ENCODE measurements at regions of chr5 and their contacts with region 1.

Region 1: DNA sequence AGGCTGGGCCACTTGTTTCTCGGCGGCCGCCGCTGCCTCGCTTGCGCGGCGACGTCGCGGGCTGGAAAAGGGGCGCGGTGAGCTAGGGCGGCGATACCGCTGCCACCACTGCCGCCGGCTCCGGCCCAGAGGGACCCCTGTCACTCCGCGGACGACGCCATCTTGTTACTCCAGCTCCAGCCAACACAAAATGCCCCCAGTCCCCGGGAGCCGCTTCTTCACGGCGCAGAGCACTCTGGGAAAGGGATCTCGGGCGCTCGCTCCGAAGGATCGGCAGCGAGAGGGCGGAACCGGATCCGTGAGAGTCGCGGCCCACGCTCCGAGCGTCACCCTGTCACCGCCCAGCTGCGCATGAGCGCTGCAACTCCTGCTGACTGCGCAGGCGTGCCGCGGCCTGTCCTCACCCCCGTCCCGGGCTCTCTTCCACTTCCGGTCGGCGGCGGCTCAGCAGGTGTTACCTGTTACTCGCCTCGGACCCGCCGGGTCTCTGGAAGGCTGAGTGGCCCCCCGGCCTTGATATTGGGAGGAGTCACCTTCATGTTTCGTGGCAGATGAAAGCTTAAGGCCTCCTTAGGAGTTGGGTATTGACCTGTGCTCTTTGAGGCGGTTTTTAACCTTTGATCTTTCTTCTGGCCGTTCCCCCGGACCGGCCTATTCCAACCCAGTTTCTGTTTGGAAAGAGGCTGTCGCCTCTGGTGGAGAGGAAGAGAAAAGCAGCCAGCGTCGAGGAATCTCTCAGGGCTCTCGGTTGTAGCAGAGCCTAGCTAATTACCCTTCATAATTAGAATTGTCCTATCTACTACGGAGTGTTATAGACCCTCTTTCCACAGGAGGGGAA is at the start of gene CSNK1A1:
- DNase-seq: peak; percentile 99
- H3K4me3 Mint-ChIP-seq: peak within 1 kb of the TSS; percentile 93
- H3K27ac Mint-ChIP-seq: peak within 1 kb of the TSS; percentile 95
- H3K4me1 Mint-ChIP-seq: peaks cover 37% of the 10 kb centered on the region
- H3K27me3 Mint-ChIP-seq: no peaks in the 10 kb centered on the region
- total RNA-seq, gene CSNK1A1: 194 to 203 TPM

Region 2: GRCh38 chr5:149345147-149345875 is 206.1 kb before region 1 on chr5 and contains the start of gene GRPEL2:
- CTCF ChIA-PET with region 1: interaction called, 7 read pairs
- POLR2A ChIA-PET with region 1: interaction called, 71 read pairs
- DNase-seq: peak; percentile 94
- H3K4me3 Mint-ChIP-seq: peak within 1 kb of the TSS; percentile 81
- H3K27ac Mint-ChIP-seq: peak within 1 kb of the TSS; percentile 87
- H3K4me1 Mint-ChIP-seq: peaks cover 47% of the 10 kb centered on the region
- H3K27me3 Mint-ChIP-seq: no peaks in the 10 kb centered on the region
- total RNA-seq, gene GRPEL2: 43.8 to 49.4 TPM

Region 3: GRCh38 chr5:149367249-149367971 is 184.0 kb before region 1 on chr5:
- CTCF ChIA-PET with region 1: interaction called, 10 read pairs
- POLR2A ChIA-PET with region 1: interaction called, 5 read pairs
- DNase-seq: peak; percentile 63
- H3K4me3 Mint-ChIP-seq: no peak overlapping the region
- H3K27ac Mint-ChIP-seq: no peak overlapping the region
- H3K4me1 Mint-ChIP-seq: peaks cover 6% of the 10 kb centered on the region
- H3K27me3 Mint-ChIP-seq: no peaks in the 10 kb centered on the region

Region 4: DNA sequence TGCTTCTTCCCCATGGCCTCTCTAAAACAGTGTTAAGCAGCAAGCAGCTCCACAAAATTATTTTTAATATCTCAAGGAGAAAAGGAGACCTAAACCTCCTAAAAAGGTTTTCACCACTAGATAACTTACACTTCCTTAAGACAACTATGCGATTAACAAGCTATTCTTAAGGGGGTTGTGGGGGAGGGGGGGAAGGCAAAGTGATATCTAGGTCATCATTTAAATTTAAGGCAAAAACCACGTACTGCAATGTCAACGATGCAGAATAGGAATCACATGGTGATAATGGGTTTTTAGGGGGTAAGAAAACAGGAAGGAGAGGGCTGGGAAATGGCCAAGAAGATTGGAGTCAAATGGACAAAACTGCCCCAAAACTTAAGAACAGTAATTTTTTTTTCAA is 32.8 kb before region 1 on chr5:
- CTCF ChIA-PET with region 1: interaction called, 4 read pairs
- POLR2A ChIA-PET with region 1: interaction called, 13 read pairs
- DNase-seq: no peak
- H3K4me3 Mint-ChIP-seq: no peak overlapping the region
- H3K27ac Mint-ChIP-seq: no peak overlapping the region
- H3K4me1 Mint-ChIP-seq: peaks cover 45% of the 10 kb centered on the region
- H3K27me3 Mint-ChIP-seq: no peaks in the 10 kb centered on the region

Region 5: GRCh38 chr5:149540089-149540488 is 11.3 kb before region 1 on chr5:
- CTCF ChIA-PET with region 1: interaction called, 5 read pairs
- POLR2A ChIA-PET with region 1: interaction called, 35 read pairs
- DNase-seq: no peak
- H3K4me3 Mint-ChIP-seq: no peak overlapping the region
- H3K27ac Mint-ChIP-seq: no peak overlapping the region
- H3K4me1 Mint-ChIP-seq: peaks cover 43% of the 10 kb centered on the region
- H3K27me3 Mint-ChIP-seq: no peaks in the 10 kb centered on the region

Region 6: DNA sequence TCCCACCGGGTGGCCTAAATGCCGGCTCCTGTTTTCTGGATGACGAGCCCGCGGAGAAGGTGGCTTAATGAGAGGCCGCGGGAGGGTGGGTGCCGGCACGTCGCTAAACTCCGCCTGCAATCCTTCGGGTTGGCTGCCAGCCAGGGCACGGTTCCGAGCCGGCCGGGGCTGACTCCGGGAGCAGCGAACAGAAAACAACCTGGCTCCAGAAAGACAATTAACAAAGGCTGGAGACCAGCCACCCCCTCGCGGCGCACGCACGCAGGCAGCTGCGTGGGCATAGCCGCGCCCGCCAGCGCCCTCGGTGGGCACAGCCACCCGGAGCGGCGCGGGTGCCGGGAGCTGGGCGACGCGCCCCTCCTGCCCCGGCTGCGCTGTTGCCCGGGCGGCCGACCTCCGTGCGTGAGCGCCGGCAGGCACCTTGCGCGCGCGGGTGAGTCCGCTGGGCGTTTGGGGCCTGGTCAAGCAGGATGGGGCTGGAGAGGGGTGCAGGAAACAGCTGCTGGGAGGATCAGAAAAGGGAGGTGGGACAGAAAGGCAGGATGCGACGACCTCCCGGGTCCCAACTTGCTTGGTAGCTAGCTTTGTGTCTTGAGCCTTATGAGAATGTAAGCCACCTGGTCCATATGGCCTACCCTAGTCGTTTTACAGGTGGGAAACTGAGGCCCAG is 29.9 kb after region 1 on chr5 and contains the start of gene ARHGEF37:
- CTCF ChIA-PET with region 1: interaction called, 5 read pairs
- POLR2A ChIA-PET with region 1: interaction called, 16 read pairs
- DNase-seq: peak; percentile 41
- H3K4me3 Mint-ChIP-seq: peak within 1 kb of the TSS; percentile 71
- H3K27ac Mint-ChIP-seq: no peak within 1 kb of the TSS
- H3K4me1 Mint-ChIP-seq: peaks cover 18% of the 10 kb centered on the region
- H3K27me3 Mint-ChIP-seq: peaks cover 14% of the 10 kb centered on the region
- total RNA-seq, gene ARHGEF37: 0.88 to 1.1 TPM

Measured in activated CD4-positive, alpha-beta memory T cell treated with anti-CD3 and anti-CD28 coated beads, Interleukin-2, amount 10 ng/mL, durations not matched to agents 7 days and 5 days (primary cell).